GM10248 (cell line): ENCODE measurements at regions of chr12 and their contacts with region 1.

Region 1: DNA sequence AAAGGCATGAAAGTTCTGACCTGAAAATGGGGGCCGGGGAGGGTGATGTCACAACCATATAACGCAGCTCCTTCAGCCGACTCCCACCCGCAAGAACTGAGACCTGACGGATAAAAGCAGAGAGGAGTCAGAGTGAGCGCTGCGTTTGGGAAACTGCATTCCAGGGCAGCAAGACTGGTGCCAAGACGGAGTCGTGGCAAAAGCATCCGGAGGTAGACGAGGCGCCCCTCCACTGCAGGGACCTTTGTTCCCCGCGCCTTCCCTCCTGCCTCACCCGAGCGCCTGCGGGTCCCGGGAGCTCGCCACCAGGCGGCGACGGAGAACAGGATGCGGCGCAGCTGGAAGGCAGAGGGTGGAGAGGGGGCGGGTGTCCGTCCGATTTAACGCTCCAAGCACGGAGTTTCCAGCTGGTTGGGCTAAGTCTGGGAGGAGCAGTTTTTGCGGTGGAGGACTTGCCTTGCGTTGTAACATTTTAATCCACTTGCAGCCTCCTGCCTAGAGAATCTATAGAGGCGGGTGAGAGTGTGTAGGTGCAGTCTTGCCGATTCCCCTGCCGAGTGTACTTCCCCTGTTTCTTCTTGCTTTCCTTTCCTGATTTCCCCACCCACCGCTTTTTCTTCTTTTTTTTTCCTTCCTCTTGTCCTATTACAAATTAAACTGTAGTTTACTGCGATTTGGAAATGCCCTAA is 1.2 kb upstream of the CPNE8 start:
- DNase-seq: peak; percentile 78
- CTCF ChIP-seq: peak; percentile 92

Region 2: DNA sequence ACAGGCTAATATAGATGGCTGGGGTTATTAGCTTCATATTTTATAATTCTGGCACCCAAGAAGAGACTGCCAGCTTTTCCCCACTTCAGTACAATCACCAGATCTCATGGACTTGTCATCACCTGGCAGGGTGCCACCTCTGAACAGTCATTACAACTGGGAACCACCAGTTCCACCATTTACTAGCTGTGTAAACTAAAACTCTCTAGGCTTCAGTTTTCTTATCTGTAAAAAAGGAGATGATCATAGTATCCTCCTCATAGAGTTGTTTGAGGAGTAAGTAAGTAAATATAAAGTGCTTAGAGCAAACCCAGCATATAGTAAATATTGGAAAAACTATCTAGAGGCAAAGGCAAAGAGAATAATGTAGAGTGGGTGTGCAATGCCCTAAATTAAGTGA is 20.6 kb before region 1 on chr12:
- CTCF ChIA-PET with region 1: interaction called, 10 read pairs
- POLR2A ChIA-PET with region 1: no interaction called
- DNase-seq: no peak
- CTCF ChIP-seq: no peak

Region 3: GRCh38 chr12:38921025-38921677 is 14.5 kb after region 1 on chr12:
- CTCF ChIA-PET with region 1: interaction called, 44 read pairs
- POLR2A ChIA-PET with region 1: no interaction called
- DNase-seq: peak; percentile 23
- CTCF ChIP-seq: peak; percentile 53

Region 4: GRCh38 chr12:39161465-39162085 is 254.9 kb after region 1 on chr12:
- CTCF ChIA-PET with region 1: no interaction called
- POLR2A ChIA-PET with region 1: no interaction called
- DNase-seq: no peak
- CTCF ChIP-seq: no peak

Region 5: GRCh38 chr12:39319187-39319586 is 412.6 kb after region 1 on chr12:
- CTCF ChIA-PET with region 1: no interaction called
- POLR2A ChIA-PET with region 1: no interaction called
- DNase-seq: no peak
- CTCF ChIP-seq: no peak